ENCODE measurements at regions of chr2 and their contacts with region 1.

Region 1: DNA sequence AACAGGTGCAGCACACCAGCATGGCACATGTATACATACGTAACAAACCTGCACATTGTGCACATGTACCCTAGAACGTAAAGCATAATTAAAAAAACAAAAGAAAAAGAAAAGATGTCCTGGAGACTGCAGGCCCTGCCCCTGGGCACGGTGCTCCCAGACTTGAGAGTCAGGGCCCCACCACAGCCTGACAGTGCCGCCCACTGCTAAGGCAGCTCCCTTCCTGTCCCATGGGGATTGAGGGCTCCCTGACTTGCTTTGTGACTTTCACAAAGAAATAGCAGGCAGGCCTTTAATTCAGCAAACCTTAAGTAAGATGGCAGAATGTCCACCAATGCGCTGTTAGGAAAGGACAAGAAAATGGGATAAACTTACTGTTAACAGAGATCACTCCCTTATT is 116.8 kb downstream of the NDUFA10 start:
- DNase-seq: no peak
- ATAC-seq: no peak
- H3K4me3 ChIP-seq: no peak overlapping the region
- H3K27ac ChIP-seq: no peak overlapping the region
- H3K4me1 ChIP-seq: no peaks in the 10 kb centered on the region
- H3K27me3 ChIP-seq: no peaks in the 10 kb centered on the region
- CTCF ChIP-seq: no peak

Region 2: DNA sequence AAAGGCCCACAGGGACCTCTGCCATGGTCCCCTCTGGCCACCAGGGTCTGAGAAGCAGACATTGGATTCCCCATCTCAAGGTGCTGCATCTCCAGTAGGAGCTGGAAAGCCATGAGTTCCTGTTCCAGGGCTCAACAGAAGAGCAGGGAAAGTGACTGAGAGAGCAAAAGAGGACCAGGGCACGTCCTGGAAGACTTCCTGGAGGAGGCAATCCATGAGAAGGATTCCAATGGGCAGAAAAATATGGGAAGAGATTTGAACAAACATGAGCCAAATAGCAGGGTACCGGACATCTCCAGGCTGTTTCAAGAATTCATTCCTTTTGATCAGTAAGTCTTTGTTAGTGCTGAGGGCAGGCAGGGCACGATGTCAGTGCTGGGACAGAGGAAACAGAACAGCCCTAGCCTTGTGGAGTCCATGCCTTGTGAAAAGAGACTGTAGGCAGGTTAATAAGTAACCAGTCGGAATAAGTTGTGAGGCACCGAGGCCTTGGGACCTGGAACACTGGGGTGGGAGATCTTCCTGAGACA is 1133.3 kb before region 1 on chr2:
- CTCF ChIA-PET with region 1: no interaction called
- POLR2A ChIA-PET with region 1: interaction called, 10 read pairs
- in situ Hi-C with region 1: no loop called
- intact Hi-C with region 1: no loop called
- DNase-seq: no peak
- ATAC-seq: no peak
- H3K4me3 ChIP-seq: no peak overlapping the region
- H3K27ac ChIP-seq: no peak overlapping the region
- H3K4me1 ChIP-seq: no peaks in the 10 kb centered on the region
- H3K27me3 ChIP-seq: no peaks in the 10 kb centered on the region
- CTCF ChIP-seq: no peak

Measured in Panc1 (cell line).